Esophagus squamous epithelium (tissue), 5 donors: ENCODE measurements at regions of chr11 and their contacts with region 1.

Region 1: GRCh38 chr11:57798905-57799559 is 37.4 kb downstream of the CTNND1 start:
- DNase-seq: no peak
- H3K4me3 ChIP-seq: no peak overlapping the region
- H3K27ac ChIP-seq: peak overlapping the region; percentile 71 to 88 (median 80)
- H3K4me1 ChIP-seq: peaks cover 24 to 87% (median 48%) of the 10 kb centered on the region in 3 donors
- H3K27me3 ChIP-seq: no peaks in the 10 kb centered on the region
- CTCF ChIP-seq: no peak
- POLR2A ChIP-seq: peak in 2 of 4 donors; percentile 28 to 33

Region 2: GRCh38 chr11:57758174-57758573 is 40.9 kb before region 1 on chr11:
- intact Hi-C with region 1: loop called (anchors 5 kb)
- DNase-seq: no peak
- H3K4me3 ChIP-seq: no peak overlapping the region
- H3K27ac ChIP-seq: no peak overlapping the region
- H3K4me1 ChIP-seq: peaks cover 0 to 13% (median 0%) of the 10 kb centered on the region in 3 donors
- H3K27me3 ChIP-seq: no peaks in the 10 kb centered on the region
- CTCF ChIP-seq: no peak
- POLR2A ChIP-seq: no peak

Region 3: DNA sequence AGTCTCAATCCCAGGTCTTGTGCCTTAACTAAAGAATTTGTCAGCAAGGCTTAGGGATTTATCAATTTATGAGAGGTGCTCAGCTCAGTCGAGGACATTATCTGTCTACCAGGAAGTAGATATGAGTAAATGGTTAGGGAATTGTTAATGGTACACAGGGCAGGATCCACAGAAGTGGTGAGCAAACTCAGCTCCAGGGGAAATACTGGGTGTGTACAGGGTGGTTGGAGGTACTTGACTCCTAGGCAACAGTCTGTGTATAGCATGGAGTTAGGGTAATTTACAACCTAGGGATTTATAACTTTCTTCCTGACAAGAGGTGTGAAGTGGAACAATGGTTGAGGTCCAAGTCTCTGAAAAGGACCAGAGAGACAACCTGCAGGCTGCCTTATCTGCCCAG is 101.3 kb after region 1 on chr11:
- intact Hi-C with region 1: no loop called
- DNase-seq: no peak
- H3K4me3 ChIP-seq: no peak overlapping the region
- H3K27ac ChIP-seq: peak overlapping the region; percentile 67 to 92 (median 76)
- H3K4me1 ChIP-seq: peaks cover 8 to 63% (median 18%) of the 10 kb centered on the region in 3 donors
- H3K27me3 ChIP-seq: no peaks in the 10 kb centered on the region
- CTCF ChIP-seq: no peak
- POLR2A ChIP-seq: no peak

Region 4: DNA sequence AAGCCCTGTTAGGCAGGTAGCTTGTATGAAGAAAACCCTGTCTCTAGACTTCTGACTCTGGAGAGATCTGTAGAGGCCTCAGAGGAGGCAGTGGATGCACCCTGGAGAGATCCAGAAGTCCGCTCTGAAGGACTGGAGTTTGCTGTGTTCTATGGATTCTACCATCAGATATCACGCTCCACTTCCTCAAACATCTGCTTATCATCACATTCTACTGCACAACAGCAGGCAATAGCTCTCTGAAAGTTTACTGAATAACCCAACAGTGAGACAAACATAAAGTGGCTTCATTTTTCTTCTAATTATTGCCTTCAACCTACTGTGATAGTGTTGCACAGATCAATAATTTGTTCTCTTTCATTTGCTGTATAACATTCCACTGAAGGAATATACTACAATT is 165.6 kb after region 1 on chr11:
- intact Hi-C with region 1: no loop called
- DNase-seq: no peak
- H3K4me3 ChIP-seq: no peak overlapping the region
- H3K27ac ChIP-seq: no peak overlapping the region
- H3K4me1 ChIP-seq: no peaks in the 10 kb centered on the region
- H3K27me3 ChIP-seq: no peaks in the 10 kb centered on the region
- CTCF ChIP-seq: no peak
- POLR2A ChIP-seq: no peak